K562 (cell line): ENCODE measurements at regions of chr15 and their contacts with region 1.

Region 1: GRCh38 chr15:78944669-78945407 is at the start of gene CTSH:
- DNase-seq: peak; percentile 90 to 98 (median 96)
- ATAC-seq: peak; percentile 94
- H3K4me3 ChIP-seq: peak within 1 kb of the TSS; percentile 87
- H3K27ac ChIP-seq: peak within 1 kb of the TSS; percentile 78
- H3K4me1 ChIP-seq: peaks cover 21 to 22% of the 10 kb centered on the region in 2 experiments
- H3K27me3 ChIP-seq: no peaks in the 10 kb centered on the region
- CTCF ChIP-seq: no peak
- EP300 ChIP-seq: no peak
- POLR2A ChIP-seq: peak; percentile 79
- RAD21 ChIP-seq: no peak
- polyA plus RNA-seq, gene CTSH: 15.0 to 35.1 TPM

Region 2: GRCh38 chr15:78934655-78935023 is 10.2 kb before region 1 on chr15:
- CTCF ChIA-PET with region 1: no interaction called
- POLR2A ChIA-PET with region 1: interaction called, 10 read pairs
- in situ Hi-C with region 1: no loop called
- intact Hi-C with region 1: no loop called
- DNase-seq: no peak
- ATAC-seq: no peak
- H3K4me3 ChIP-seq: no peak overlapping the region
- H3K27ac ChIP-seq: no peak overlapping the region
- H3K4me1 ChIP-seq: peaks cover 26 to 34% of the 10 kb centered on the region in 2 experiments
- H3K27me3 ChIP-seq: no peaks in the 10 kb centered on the region
- CTCF ChIP-seq: no peak
- EP300 ChIP-seq: no peak
- POLR2A ChIP-seq: no peak
- RAD21 ChIP-seq: no peak

Region 3: GRCh38 chr15:79209690-79210089 is 264.9 kb after region 1 on chr15:
- CTCF ChIA-PET with region 1: no interaction called
- POLR2A ChIA-PET with region 1: no interaction called
- in situ Hi-C with region 1: no loop called
- intact Hi-C with region 1: no loop called
- DNase-seq: peak; percentile 22 to 31 (median 28)
- ATAC-seq: peak; percentile 51
- H3K4me3 ChIP-seq: no peak overlapping the region
- H3K27ac ChIP-seq: no peak overlapping the region
- H3K4me1 ChIP-seq: peaks cover 2 to 4% of the 10 kb centered on the region in 2 experiments; a peak in 1 of 5 replicates
- H3K27me3 ChIP-seq: peaks cover 5 to 26% of the 10 kb centered on the region in 2 experiments; a peak in 4 of 5 replicates
- CTCF ChIP-seq: peak; percentile 19 to 57 (median 30); a peak in 4 of 6 replicates
- EP300 ChIP-seq: no peak
- POLR2A ChIP-seq: no peak
- RAD21 ChIP-seq: no peak

Region 4: DNA sequence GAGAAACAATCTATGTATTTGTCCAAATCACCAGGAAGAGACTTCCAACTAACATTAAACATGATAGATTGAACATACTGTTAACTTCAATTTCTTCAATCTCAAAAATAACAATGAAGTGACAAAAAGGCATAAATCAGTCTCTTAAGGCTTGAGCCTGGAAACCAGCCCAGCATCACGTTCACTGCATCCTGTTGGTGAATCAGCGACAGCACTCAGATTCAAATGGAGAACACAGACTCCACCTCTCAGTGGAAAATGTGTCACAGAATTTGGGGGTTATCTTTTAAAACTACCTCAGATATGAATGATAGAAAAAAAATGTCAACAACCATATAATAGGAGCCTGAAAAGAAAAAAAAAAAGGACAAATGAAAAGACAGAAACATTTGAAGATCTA is 699.3 kb after region 1 on chr15:
- CTCF ChIA-PET with region 1: no interaction called
- POLR2A ChIA-PET with region 1: no interaction called
- in situ Hi-C with region 1: no loop called
- intact Hi-C with region 1: no loop called
- DNase-seq: no peak
- ATAC-seq: no peak
- H3K4me3 ChIP-seq: no peak overlapping the region
- H3K27ac ChIP-seq: no peak overlapping the region
- H3K4me1 ChIP-seq: no peaks in the 10 kb centered on the region
- H3K27me3 ChIP-seq: no peaks in the 10 kb centered on the region
- CTCF ChIP-seq: no peak
- EP300 ChIP-seq: no peak
- POLR2A ChIP-seq: no peak
- RAD21 ChIP-seq: no peak